PC-9 (cell line): ENCODE measurements at regions of chr12 and their contacts with region 1.

Region 1: DNA sequence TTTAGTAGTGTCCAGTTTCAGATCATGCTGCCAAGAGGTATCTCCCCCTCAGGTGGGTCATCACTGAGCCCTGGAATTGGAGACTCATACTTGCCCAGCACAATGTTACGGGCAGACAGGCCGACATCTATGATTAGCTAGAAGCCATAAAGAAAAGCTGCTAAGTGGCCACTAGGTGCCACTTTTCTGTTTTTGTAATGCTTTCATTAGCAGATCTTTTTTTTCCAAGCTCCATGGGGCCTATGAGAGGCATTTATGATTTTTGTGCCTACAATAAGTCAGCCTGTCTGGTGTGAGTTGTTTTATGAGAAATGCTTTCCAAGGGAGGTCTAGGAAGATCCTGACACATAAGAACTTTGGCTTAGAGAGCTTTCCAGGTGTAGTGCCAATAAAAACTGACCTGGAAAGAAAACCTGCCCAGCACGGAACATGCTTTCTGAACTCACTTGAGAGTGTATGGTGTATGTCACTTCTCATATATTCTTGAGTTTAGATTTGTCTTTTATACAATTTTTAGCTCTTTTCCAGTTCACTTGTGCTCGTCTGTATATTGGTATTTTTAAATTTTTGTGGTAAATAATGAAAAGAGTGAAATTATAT is 21.8 kb upstream of the SMCO2 start:
- DNase-seq: peak in 1 of 2 experiments; percentile 15
- H3K4me3 ChIP-seq: no peak overlapping the region
- H3K27ac ChIP-seq: no peak overlapping the region
- H3K4me1 ChIP-seq: 0 out of 2 replicates have a peak, but pooled peaks cover 8% of the 10 kb centered on the region
- H3K27me3 ChIP-seq: no peaks in the 10 kb centered on the region
- CTCF ChIP-seq: peak; percentile 69

Region 2: GRCh38 chr12:26832822-26833742 is 591.6 kb before region 1 on chr12 and contains the start of gene ITPR2:
- CTCF ChIA-PET with region 1: no interaction called
- POLR2A ChIA-PET with region 1: no interaction called
- intact Hi-C with region 1: no loop called
- DNase-seq: peak; percentile 80 to 99
- H3K4me3 ChIP-seq: peak within 1 kb of the TSS; percentile 83
- H3K27ac ChIP-seq: peak within 1 kb of the TSS; percentile 61
- H3K4me1 ChIP-seq: peaks cover 14% of the 10 kb centered on the region
- H3K27me3 ChIP-seq: no peaks in the 10 kb centered on the region
- CTCF ChIP-seq: peak; percentile 51; the same call in 1 of the 2 replicates
- total RNA-seq, gene ITPR2: 16.2 and 26.0 TPM in 2 replicates

Region 3: DNA sequence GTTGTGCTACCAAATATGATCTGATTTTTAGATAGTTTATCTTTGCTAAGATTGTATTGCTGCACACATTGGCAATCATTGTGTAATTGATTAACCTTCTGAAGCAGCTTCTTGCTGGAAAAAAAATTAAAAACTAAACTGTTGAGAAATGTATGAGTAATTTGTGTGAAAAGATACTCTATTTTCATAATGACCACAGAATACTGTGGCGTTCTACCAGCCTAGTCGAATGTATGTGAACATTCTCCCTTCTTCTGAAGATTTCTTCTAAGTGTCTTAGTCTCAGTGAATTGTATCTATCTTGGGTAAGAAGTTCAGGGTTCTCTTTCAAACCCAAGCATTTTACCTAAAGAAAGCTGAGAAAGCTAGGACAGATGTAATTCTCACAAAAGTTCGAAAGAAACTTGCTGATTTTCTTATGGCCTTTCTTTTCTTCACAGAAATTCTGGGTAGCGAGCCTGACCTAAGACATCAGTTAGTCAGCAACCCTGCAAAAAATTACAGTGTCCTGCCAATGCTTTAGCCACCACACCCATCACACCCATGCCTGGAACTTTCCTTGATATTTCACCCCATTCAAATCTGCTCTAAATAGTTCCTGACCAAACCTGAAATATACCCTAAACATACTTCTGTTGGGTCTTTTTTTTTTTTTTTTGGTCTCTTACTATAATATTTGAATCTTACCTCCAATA is 315.2 kb before region 1 on chr12:
- CTCF ChIA-PET with region 1: no interaction called
- POLR2A ChIA-PET with region 1: no interaction called
- intact Hi-C with region 1: no loop called
- DNase-seq: peak in 1 of 2 experiments; percentile 5
- H3K4me3 ChIP-seq: no peak overlapping the region
- H3K27ac ChIP-seq: no peak overlapping the region
- H3K4me1 ChIP-seq: peaks cover 20% of the 10 kb centered on the region; the same call in 1 of the 2 replicates
- H3K27me3 ChIP-seq: no peaks in the 10 kb centered on the region
- CTCF ChIP-seq: no peak

Region 4: GRCh38 chr12:27652174-27652763 is 227.5 kb after region 1 on chr12:
- CTCF ChIA-PET with region 1: interaction called, 4 read pairs
- POLR2A ChIA-PET with region 1: no interaction called
- intact Hi-C with region 1: loop called (anchors 2 kb)
- DNase-seq: peak; percentile 42 to 58
- H3K4me3 ChIP-seq: no peak overlapping the region
- H3K27ac ChIP-seq: no peak overlapping the region
- H3K4me1 ChIP-seq: no peaks in the 10 kb centered on the region
- H3K27me3 ChIP-seq: no peaks in the 10 kb centered on the region
- CTCF ChIP-seq: peak; percentile 95

Region 5: GRCh38 chr12:27703710-27704452 is 279.1 kb after region 1 on chr12:
- CTCF ChIA-PET with region 1: no interaction called
- POLR2A ChIA-PET with region 1: no interaction called
- intact Hi-C with region 1: loop called (anchors 1 kb)
- DNase-seq: peak; percentile 71 to 77
- H3K4me3 ChIP-seq: no peak overlapping the region
- H3K27ac ChIP-seq: peak overlapping the region; percentile 67
- H3K4me1 ChIP-seq: 0 out of 2 replicates have a peak, but pooled peaks cover 3% of the 10 kb centered on the region
- H3K27me3 ChIP-seq: no peaks in the 10 kb centered on the region
- CTCF ChIP-seq: peak; percentile 96

Region 6: DNA sequence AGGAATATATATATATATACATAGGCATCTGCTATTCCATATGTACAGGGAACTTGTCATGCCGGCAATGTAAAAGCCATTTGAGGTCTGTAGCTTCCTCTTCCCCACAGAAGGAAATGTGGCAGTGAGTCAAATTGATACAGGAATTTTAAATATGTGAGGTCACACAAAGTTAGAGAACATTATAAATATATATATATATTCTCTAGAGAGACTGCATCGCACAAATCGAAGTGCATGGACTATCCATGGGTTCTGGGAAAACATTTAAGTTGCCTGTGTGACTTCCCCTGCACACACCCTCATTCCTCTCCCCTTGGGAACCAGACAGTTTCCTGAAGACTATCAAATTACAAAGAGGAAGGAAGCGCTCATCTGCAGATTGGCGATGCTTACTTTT is 664.6 kb after region 1 on chr12:
- CTCF ChIA-PET with region 1: no interaction called
- POLR2A ChIA-PET with region 1: no interaction called
- intact Hi-C with region 1: no loop called
- DNase-seq: no peak
- H3K4me3 ChIP-seq: no peak overlapping the region
- H3K27ac ChIP-seq: no peak overlapping the region
- H3K4me1 ChIP-seq: no peaks in the 10 kb centered on the region
- H3K27me3 ChIP-seq: no peaks in the 10 kb centered on the region
- CTCF ChIP-seq: no peak